Dorsolateral prefrontal cortex (tissue), 120 donors: ENCODE measurements at regions of chr2 and their contacts with region 1.

Region 1: DNA sequence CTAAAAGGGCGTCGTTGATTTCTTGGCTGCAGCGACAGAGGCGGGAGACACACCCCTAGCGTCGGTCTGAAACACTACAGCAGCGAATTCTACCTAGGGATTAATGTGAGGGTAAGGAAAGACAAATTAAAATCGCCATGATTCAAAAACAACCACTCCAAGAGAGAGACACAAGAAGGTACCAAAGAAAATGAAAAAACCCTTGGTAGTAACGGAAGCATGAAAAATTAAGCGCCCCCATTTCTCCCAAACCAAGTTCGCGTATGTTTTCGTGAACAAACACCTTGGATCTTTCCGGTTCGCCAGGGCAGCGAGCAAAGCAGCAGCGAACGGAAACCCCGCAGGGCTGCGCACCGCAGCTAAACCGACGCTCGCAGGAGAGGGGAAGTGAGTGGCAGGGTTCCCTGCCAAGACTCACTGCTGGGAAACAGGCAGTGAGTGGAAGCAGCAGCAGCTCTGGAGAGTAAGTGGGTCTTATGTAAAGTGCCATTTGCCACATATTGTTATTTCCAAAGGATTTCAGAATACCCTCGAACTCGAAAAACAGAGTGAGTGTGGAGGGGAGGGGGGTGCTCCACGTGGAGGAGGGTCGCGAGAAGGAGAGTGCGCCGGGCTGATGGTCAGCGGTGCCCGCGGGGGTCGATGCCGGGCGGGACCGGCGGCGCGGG is 1.0 kb downstream of the PPP3R1 start:
- DNase-seq: peak in 8 of 10 donors; percentile 38 to 64 (median 46)
- H3K4me3 ChIP-seq: peak overlapping the region; percentile 71 to 97 (median 89)
- H3K27ac ChIP-seq: peak overlapping the region; percentile 29 to 99 (median 97)
- H3K27me3 ChIP-seq: no peaks in the 10 kb centered on the region
- CTCF ChIP-seq: peak; percentile 28 to 72 (median 56)

Region 2: DNA sequence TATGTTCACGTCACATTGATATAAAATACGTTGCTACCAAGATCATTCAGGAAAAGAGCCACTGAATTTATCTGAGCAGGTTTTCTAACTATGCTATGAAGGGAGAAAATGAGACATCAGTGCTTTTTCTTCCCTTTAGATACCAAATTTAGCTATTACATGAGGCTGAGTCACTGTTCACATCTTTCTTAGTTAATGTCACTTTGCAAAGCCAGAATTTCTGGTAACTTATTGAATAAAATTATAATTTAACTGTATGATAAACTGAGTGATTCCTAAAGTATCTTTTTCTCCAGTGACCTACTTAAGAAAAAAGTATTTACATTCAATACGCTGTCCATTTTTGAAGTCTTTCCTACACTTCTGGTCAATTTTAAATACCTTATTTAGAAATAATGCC is 211.2 kb before region 1 on chr2:
- intact Hi-C with region 1: no loop called
- DNase-seq: no peak
- H3K4me3 ChIP-seq: no peak overlapping the region
- H3K27ac ChIP-seq: no peak overlapping the region
- H3K27me3 ChIP-seq: no peaks in the 10 kb centered on the region
- CTCF ChIP-seq: no peak

Region 3: GRCh38 chr2:68062680-68063387 is 188.5 kb before region 1 on chr2 and contains the start of gene C1D:
- intact Hi-C with region 1: loop called in 1 of 2 experiments (anchors 10 kb)
- DNase-seq: peak; percentile 85 to 93 (median 91)
- H3K4me3 ChIP-seq: peak within 1 kb of the TSS; percentile 47 to 99 (median 85)
- H3K27ac ChIP-seq: peak within 1 kb of the TSS in 57 of 59 donors; percentile 13 to 92 (median 80)
- H3K27me3 ChIP-seq: no peaks in the 10 kb centered on the region
- CTCF ChIP-seq: peak in 34 of 56 donors; percentile 9 to 58 (median 28)
- total RNA-seq, gene C1D: 8.7 to 34.4 (median 19.7) TPM

Region 4: GRCh38 chr2:68157402-68158133 is 93.8 kb before region 1 on chr2 and contains the start of gene PNO1:
- intact Hi-C with region 1: loop called (anchors 1 to 2 kb)
- DNase-seq: peak; percentile 89 to 96 (median 94)
- H3K4me3 ChIP-seq: peak within 1 kb of the TSS; percentile 69 to 100 (median 95)
- H3K27ac ChIP-seq: peak within 1 kb of the TSS; percentile 92 to 100 (median 99)
- H3K27me3 ChIP-seq: no peaks in the 10 kb centered on the region
- CTCF ChIP-seq: peak in 17 of 56 donors; percentile 1 to 51 (median 18)
- total RNA-seq, gene PNO1: 4.0 to 14.5 (median 8.7) TPM

Region 5: GRCh38 chr2:68196120-68196716 is 55.1 kb before region 1 on chr2:
- intact Hi-C with region 1: loop called (anchors 2 to 5 kb)
- DNase-seq: peak in 3 of 10 donors; percentile 9 to 39 (median 25)
- H3K4me3 ChIP-seq: no peak overlapping the region
- H3K27ac ChIP-seq: peak overlapping the region in 1 of 59 donors; percentile 7
- H3K27me3 ChIP-seq: no peaks in the 10 kb centered on the region
- CTCF ChIP-seq: peak in 52 of 56 donors; percentile 45 to 94 (median 80)

Region 6: GRCh38 chr2:68282811-68283418 is 31.6 kb after region 1 on chr2:
- intact Hi-C with region 1: loop called (anchors 2 to 5 kb)
- DNase-seq: no peak
- H3K4me3 ChIP-seq: peak overlapping the region in 36 of 59 donors; percentile 0 to 51 (median 23)
- H3K27ac ChIP-seq: no peak overlapping the region
- H3K27me3 ChIP-seq: no peaks in the 10 kb centered on the region
- CTCF ChIP-seq: peak; percentile 67 to 95 (median 81)

Region 7: DNA sequence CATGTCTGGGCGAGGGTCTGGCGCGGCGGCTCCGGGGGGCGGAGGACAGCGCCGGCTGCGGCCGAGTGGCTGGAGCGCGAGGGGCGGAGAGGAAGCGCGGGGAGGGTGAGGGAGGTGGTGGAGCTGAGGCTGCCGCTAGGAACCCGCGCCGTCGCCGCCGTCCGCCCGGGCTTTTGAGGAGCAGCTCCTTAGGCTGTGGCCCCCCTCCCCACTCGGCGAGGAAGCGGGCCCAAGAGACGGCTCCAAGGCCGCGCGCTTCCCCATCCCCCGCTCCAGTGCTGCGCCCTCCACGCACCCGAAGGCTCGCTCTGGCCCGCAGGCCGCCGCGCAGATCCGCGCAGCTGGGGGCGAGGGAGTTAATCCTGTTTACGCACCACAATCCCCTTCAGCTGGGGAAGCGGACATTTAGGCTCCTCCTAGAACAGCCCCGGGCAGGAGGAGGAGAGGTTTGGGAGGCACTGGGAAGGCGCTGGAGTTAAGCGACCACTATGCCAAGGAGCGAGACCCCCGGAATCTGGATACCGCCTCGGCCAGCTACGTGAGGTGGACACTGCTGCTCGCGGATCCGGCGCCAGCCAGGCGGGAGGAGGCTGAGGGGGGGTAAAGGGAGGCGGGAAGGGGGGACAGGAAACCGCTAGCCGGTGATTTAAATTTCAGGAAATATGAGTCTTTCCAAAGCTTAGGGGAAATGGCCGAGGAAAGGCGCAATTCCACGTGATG is 68.2 kb after region 1 on chr2 and contains the start of gene CNRIP1:
- intact Hi-C with region 1: loop called (anchors 1 to 2 kb)
- DNase-seq: peak; percentile 47 to 78 (median 69)
- H3K4me3 ChIP-seq: peak within 1 kb of the TSS; percentile 67 to 97 (median 87)
- H3K27ac ChIP-seq: peak within 1 kb of the TSS; percentile 64 to 99 (median 96)
- H3K27me3 ChIP-seq: no peaks in the 10 kb centered on the region
- CTCF ChIP-seq: peak in 6 of 56 donors; percentile 2 to 29 (median 12)
- total RNA-seq, gene CNRIP1: 48.6 to 133 (median 99.0) TPM